Activated B cell treated with CpG ODN at 0.5 μM for 24 hours (primary cell): ENCODE measurements at regions of chr15 and their contacts with region 1.

Region 1: GRCh38 chr15:49620658-49621368 is at the starts of genes DTWD1 and FAM227B:
- DNase-seq: peak; percentile 90
- ATAC-seq: peak; percentile 96
- H3K4me3 Mint-ChIP-seq: peak within 1 kb of the TSS; percentile 96
- H3K27ac Mint-ChIP-seq: peak within 1 kb of the TSS; percentile 96
- H3K4me1 Mint-ChIP-seq: peaks cover 31% of the 10 kb centered on the region
- H3K27me3 Mint-ChIP-seq: no peaks in the 10 kb centered on the region
- CTCF ChIP-seq: no peak
- total RNA-seq, gene DTWD1: 20.5 and 21.4 TPM in 2 replicates
- total RNA-seq, gene FAM227B: 4.3 and 4.5 TPM in 2 replicates

Region 2: DNA sequence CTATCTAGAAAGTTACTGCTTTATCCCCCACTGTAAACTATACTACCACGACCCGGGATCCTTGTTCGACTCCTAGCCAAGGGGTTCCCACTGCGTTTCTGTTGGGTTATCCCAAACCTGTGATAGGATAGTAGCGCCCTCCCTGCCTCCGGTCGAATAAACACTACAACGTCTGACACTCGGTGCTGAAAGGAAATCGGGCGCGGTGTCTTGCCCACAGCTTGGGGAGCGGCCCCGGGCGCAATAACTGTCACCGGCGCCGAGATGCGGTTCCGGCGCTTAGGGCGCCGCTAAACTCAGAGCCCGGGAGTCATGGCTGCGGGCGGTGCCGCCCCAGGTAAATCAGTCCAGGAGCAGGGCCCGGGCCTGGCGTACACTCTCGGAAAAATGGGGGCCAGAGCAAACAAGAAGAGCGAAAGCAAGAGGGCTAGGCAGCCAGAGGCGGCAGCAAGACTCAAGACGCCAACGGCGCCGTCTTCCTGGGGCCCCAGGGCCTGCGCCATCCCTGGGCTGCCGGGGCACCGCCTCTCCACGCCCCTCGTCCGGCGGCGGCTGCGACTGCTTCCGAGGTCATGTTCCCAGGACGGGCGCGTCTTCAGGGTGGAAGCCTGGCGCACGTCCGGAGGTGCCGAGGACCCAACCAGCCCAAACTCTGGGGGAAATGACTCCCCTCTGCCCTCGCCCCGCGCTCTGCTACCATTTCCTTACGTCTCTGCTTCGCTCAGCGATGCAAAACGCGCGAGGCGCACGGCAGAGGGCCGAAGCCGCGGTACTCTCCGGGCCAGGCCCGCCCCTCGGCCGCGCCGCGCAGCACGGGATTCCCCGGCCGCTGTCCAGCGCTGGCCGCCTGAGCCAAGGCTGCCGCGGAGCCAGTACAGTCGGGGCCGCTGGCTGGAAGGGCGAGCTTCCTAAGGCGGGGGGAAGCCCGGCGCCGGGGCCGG is 1289.7 kb before region 1 on chr15 and contains the start of gene DUT:
- CTCF ChIA-PET with region 1: no interaction called
- POLR2A ChIA-PET with region 1: no interaction called
- intact Hi-C with region 1: loop called (anchors 2 kb)
- DNase-seq: peak; percentile 72
- ATAC-seq: peak; percentile 79
- H3K4me3 Mint-ChIP-seq: peak within 1 kb of the TSS; percentile 98
- H3K27ac Mint-ChIP-seq: peak within 1 kb of the TSS; percentile 97
- H3K4me1 Mint-ChIP-seq: peaks cover 28% of the 10 kb centered on the region
- H3K27me3 Mint-ChIP-seq: no peaks in the 10 kb centered on the region
- CTCF ChIP-seq: no peak
- total RNA-seq, gene DUT: 75.7 and 81.6 TPM in 2 replicates

Region 3: GRCh38 chr15:49155110-49155833 is 465.5 kb before region 1 on chr15 and contains the start of gene COPS2:
- CTCF ChIA-PET with region 1: no interaction called
- POLR2A ChIA-PET with region 1: interaction called, 16 read pairs
- intact Hi-C with region 1: loop called (anchors 1 kb)
- DNase-seq: peak; percentile 78
- ATAC-seq: peak; percentile 93
- H3K4me3 Mint-ChIP-seq: peak within 1 kb of the TSS; percentile 95
- H3K27ac Mint-ChIP-seq: peak within 1 kb of the TSS; percentile 95
- H3K4me1 Mint-ChIP-seq: peaks cover 43% of the 10 kb centered on the region
- H3K27me3 Mint-ChIP-seq: no peaks in the 10 kb centered on the region
- CTCF ChIP-seq: no peak
- total RNA-seq, gene COPS2: 53.1 and 54.4 TPM in 2 replicates

Region 4: GRCh38 chr15:50686468-50687301 is 1065.9 kb after region 1 on chr15 and contains the start of gene TRPM7:
- CTCF ChIA-PET with region 1: no interaction called
- POLR2A ChIA-PET with region 1: no interaction called
- intact Hi-C with region 1: loop called (anchors 2 kb)
- DNase-seq: peak; percentile 92
- ATAC-seq: peak; percentile 80
- H3K4me3 Mint-ChIP-seq: peak within 1 kb of the TSS; percentile 99
- H3K27ac Mint-ChIP-seq: peak within 1 kb of the TSS; percentile 92
- H3K4me1 Mint-ChIP-seq: peaks cover 58% of the 10 kb centered on the region
- H3K27me3 Mint-ChIP-seq: no peaks in the 10 kb centered on the region
- CTCF ChIP-seq: no peak
- total RNA-seq, gene TRPM7: 59.4 and 64.7 TPM in 2 replicates